ENCODE measurements at regions of chr16 and their contacts with region 1.

Region 1: GRCh38 chr16:57720142-57720575 is 15.4 kb upstream of the KATNB1 start:
- DNase-seq: peak; percentile 72 to 88 (median 81)
- ATAC-seq: peak; percentile 94 to 100 (median 97)
- H3K4me3 ChIP-seq: no peak overlapping the region
- H3K27ac ChIP-seq: no peak overlapping the region
- H3K4me1 ChIP-seq: no peaks in the 10 kb centered on the region
- H3K27me3 ChIP-seq: no peaks in the 10 kb centered on the region
- CTCF ChIP-seq: peak; percentile 53 to 71 (median 57)

Region 2: DNA sequence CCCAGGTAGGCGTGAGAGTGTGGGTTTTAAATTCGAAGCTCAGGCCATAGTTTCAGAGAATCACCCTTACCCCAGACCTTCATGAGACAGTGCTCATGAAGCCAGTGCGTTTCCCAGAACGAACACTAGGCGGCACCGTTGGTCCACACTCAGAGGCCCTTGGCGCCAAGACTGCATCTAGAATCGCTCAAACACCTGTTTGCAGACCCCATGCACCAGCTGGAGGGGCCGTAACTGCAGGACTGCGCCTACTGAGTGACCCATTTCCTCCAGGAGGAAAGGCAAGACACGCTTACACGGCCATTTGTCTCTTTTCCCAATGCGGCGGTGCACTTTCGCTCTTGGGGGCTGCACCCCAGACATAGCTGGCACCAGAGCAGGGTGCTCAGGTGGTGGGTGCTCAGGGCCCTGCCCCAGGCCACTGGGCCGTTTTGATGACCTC is 143.7 kb before region 1 on chr16:
- intact Hi-C with region 1: loop called in 1 of 3 experiments (anchors 10 kb)
- DNase-seq: peak; percentile 53 to 91 (median 82)
- ATAC-seq: peak; percentile 81 to 94 (median 91)
- H3K4me3 ChIP-seq: no peak overlapping the region
- H3K27ac ChIP-seq: no peak overlapping the region
- H3K4me1 ChIP-seq: no peaks in the 10 kb centered on the region
- H3K27me3 ChIP-seq: no peaks in the 10 kb centered on the region
- CTCF ChIP-seq: peak; percentile 83 to 93 (median 91)

Region 3: DNA sequence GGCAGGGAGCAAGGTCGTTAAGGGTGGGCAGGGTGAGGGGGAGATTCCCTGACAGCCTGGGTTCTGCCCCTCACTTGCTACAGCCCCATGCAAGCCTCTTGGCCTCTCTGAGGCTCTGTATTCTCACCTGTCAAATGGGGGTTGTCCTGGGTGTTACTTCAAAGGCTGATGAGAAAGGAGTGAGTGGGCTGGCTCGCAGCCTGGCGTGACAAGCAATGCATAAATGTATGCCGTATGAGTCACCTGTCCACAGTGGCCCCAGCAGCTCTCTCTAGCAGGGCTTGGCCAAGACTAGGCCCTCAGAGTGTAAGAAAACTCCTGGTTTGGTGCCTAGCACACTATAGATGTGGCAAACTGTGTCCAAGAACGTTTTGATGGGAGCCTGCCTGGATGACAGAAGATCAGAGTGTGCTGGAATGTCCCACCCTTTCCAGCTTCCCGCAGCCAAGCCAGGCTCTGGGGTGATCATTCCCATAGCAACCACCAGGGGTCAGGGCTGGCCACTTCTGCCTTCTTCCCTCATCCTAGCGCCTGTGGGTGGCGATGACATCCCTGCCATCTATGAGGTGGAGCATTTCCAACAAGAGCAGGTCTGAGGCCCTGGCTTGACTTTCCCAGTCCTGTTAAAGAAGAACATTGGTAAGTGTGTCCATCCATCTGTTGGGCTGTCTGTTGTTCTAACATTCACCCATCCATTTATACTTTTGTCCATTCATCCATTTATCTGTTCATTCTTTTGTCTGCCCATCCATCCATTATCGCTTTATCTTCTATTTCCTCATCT is 128.9 kb before region 1 on chr16:
- intact Hi-C with region 1: loop called in 1 of 3 experiments (anchors 5 kb)
- DNase-seq: peak; percentile 59 to 84 (median 78)
- ATAC-seq: peak; percentile 95 to 98 (median 96)
- H3K4me3 ChIP-seq: no peak overlapping the region
- H3K27ac ChIP-seq: no peak overlapping the region
- H3K4me1 ChIP-seq: no peaks in the 10 kb centered on the region
- H3K27me3 ChIP-seq: no peaks in the 10 kb centered on the region
- CTCF ChIP-seq: peak; percentile 71 to 92 (median 83)

Region 4: DNA sequence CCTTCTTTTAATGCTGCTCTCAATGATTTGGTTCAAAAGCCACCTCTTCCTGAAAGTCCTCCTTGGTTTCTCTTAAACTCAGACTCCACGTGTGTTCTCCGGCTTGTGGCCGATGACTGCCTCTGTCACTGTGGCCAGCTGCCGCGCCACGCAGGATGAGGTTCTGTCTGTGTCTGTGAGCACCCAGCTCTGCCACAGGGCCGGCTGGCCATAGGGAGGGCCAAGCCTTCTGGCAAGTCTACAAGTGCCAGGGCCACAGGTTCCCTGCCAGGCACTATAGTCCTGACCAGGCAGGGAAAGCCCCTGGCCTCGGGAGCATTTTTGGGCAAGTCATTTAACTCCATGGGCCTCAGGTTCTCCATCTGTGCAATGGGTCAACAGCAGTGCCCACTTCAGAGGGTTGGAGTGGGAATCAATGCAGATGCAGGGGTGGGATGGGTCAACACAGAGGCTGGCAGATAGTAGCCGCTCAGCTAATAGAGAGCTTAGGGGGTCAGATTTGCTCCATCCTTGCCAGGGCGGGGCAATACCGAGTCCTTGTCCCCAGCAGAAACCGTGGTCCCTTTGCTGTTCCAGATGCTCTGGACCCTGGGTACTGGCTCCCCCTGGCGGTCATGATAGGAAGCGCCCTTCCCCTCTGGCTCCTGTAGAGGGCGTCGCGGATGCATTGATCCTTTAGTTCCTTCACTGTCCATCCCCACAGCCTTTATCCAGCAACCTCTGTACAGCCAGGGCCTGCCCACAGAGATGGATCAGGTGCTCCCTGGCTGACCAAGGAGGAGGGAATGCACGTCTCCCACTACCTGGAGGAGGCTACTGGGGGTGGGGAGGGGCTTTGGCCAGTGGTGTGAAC is 71.3 kb before region 1 on chr16:
- intact Hi-C with region 1: loop called in 2 of 3 experiments (anchors 5 kb)
- DNase-seq: peak; percentile 61 to 93 (median 85)
- ATAC-seq: peak; percentile 69 to 94 (median 90)
- H3K4me3 ChIP-seq: no peak overlapping the region
- H3K27ac ChIP-seq: peak overlapping the region in 2 of 4 donors; percentile 2 to 13
- H3K4me1 ChIP-seq: no peaks in the 10 kb centered on the region
- H3K27me3 ChIP-seq: no peaks in the 10 kb centered on the region
- CTCF ChIP-seq: peak; percentile 100

Region 5: DNA sequence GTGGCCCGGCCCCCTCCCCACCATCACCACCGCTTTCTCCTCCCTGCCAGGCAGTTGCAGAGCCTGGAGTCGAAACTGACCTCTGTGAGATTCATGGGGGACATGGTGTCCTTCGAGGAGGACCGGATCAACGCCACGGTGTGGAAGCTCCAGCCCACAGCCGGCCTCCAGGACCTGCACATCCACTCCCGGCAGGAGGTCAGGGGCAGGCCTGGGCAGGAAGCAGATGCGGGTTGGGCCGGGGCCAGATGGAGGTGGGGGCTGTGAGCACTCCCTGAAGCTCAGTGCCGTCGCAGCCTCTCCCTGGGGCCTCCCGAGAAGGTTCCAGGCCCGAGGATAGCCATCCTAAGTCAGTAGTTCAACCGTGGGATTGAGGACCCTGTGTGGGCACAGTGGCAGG is 66.2 kb before region 1 on chr16:
- intact Hi-C with region 1: loop called in 2 of 3 experiments (anchors 5 kb)
- DNase-seq: peak in 2 of 6 donors; percentile 46 to 69
- ATAC-seq: no peak
- H3K4me3 ChIP-seq: no peak overlapping the region
- H3K27ac ChIP-seq: no peak overlapping the region
- H3K4me1 ChIP-seq: no peaks in the 10 kb centered on the region
- H3K27me3 ChIP-seq: no peaks in the 10 kb centered on the region
- CTCF ChIP-seq: no peak